ENCODE measurements at regions of chr6 and their contacts with region 1.

Region 1: DNA sequence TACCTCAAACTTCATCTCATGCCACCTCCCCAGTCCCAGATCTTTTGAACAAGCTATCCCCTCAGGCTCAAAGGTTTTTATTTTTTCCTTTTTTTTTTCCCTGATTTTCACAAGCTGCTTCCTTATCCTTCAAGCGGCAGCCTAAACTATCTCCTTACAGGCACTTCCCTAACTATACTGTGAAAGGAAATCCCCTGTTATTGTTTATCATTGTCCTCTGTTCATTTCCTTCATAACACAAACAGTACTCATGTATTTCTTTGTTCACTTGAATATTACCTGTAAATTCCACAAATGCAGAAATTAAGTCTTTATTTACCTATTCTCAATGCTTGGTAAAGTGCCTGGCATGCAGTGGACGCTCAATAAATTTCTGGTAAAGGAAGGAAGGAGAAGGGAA is 48.9 kb downstream of the ME1 start:
- DNase-seq: no peak
- ATAC-seq: peak; percentile 35
- H3K4me3 ChIP-seq: no peak overlapping the region
- H3K27ac ChIP-seq: no peak overlapping the region
- H3K4me1 ChIP-seq: no peaks in the 10 kb centered on the region
- H3K27me3 ChIP-seq: no peaks in the 10 kb centered on the region
- CTCF ChIP-seq: no peak
- EP300 ChIP-seq: no peak
- POLR2A ChIP-seq: no peak
- RAD21 ChIP-seq: no peak

Region 2: DNA sequence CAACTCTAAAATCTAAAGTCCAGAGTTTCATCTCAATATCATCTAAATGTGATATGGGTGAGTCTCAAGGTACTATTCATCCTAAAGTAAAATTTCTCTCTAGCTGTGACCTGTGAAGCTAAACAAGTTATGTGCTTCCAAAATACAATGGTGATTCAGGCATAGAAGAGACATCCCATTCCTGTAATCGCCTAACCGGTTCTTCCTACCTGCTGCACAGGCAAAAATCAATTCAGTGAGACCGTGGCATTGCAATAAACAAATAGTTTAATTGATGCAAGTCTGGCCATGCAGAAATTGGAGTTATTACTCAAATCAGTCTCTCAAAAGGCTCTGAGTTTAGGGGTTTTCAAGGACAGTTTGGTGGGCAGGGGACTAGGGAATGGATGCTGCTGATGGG is 549.1 kb before region 1 on chr6:
- CTCF ChIA-PET with region 1: no interaction called
- POLR2A ChIA-PET with region 1: no interaction called
- RAD21 ChIA-PET with region 1: no interaction called
- SMC1A ChIA-PET with region 1: no interaction called
- in situ Hi-C with region 1: no loop called
- intact Hi-C with region 1: no loop called
- DNase-seq: no peak
- ATAC-seq: no peak
- H3K4me3 ChIP-seq: no peak overlapping the region
- H3K27ac ChIP-seq: no peak overlapping the region
- H3K4me1 ChIP-seq: no peaks in the 10 kb centered on the region
- H3K27me3 ChIP-seq: no peaks in the 10 kb centered on the region
- CTCF ChIP-seq: no peak
- EP300 ChIP-seq: no peak
- POLR2A ChIP-seq: no peak
- RAD21 ChIP-seq: no peak

Region 3: DNA sequence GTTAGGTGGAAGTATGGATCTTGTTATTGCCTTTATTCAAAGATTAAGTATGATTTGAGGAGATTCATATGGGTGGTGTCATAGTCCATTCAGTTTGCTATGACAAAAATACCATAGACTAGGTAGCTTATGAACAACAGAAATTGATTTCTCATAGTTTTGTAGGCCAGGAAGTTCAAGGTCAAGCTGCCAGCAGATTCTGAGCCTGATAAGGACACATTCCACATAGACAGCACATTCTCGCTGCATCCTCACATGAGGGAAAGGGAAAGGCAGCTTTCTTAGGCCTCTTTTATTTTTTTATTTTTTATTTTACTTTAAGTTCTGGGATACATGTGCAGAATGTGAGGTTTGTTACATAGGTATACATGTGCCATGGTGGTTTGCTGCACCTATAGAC is 21.2 kb after region 1 on chr6:
- CTCF ChIA-PET with region 1: no interaction called
- POLR2A ChIA-PET with region 1: interaction called, 14 read pairs
- RAD21 ChIA-PET with region 1: no interaction called
- SMC1A ChIA-PET with region 1: interaction called, 3 read pairs
- in situ Hi-C with region 1: no loop called
- intact Hi-C with region 1: no loop called
- DNase-seq: no peak
- ATAC-seq: no peak
- H3K4me3 ChIP-seq: no peak overlapping the region
- H3K27ac ChIP-seq: no peak overlapping the region
- H3K4me1 ChIP-seq: no peaks in the 10 kb centered on the region
- H3K27me3 ChIP-seq: no peaks in the 10 kb centered on the region
- CTCF ChIP-seq: no peak
- EP300 ChIP-seq: no peak
- POLR2A ChIP-seq: no peak
- RAD21 ChIP-seq: no peak

Region 4: DNA sequence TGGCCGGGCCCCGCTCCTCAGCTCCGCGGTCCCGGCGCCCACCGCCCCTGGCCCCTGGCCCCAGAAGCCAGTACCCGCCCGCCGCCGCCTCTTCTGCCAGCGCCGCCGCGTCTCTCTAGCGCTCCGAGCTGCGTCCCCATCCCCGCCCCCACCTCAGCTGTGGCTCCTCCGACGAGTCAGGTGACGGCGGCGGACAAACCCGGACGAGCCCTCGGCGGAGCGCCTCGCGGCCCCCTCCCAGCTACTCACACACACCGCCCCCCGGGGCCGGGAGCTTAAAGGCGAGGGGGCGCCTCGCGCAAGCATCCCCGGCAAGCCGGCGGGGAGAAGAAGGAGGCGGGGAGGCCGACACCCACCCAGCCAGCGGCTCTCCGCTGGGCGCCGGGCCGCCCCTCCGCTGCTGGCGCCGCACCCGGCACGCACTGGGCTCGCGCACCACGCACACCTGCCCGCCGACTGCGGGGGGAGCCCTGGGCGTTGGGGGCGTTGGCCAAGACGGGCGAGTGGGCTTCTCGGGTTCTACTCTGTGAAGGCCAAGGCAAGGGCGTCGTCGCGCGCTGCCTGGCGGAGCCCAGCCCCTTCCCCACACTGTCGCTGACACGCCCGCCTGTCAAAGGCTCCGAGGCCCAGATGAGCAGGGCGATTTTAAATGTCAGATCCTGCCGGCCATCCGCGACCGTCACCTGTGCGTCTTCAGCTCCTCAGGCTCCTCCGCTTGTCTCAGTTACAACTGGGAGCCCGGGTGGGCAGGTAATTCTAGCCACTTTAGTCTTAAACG is 327.2 kb after region 1 on chr6 and contains the start of gene SNAP91:
- CTCF ChIA-PET with region 1: no interaction called
- POLR2A ChIA-PET with region 1: no interaction called
- RAD21 ChIA-PET with region 1: no interaction called
- SMC1A ChIA-PET with region 1: no interaction called
- in situ Hi-C with region 1: no loop called
- intact Hi-C with region 1: no loop called
- DNase-seq: no peak
- ATAC-seq: peak; percentile 79
- H3K4me3 ChIP-seq: peak within 1 kb of the TSS; percentile 27; the same call in 1 of the 2 replicates
- H3K27ac ChIP-seq: no peak within 1 kb of the TSS
- H3K4me1 ChIP-seq: no peaks in the 10 kb centered on the region
- H3K27me3 ChIP-seq: peaks cover 1 to 13% of the 10 kb centered on the region in 2 experiments; a peak in 2 of 4 replicates
- CTCF ChIP-seq: no peak
- EP300 ChIP-seq: no peak
- POLR2A ChIP-seq: no peak
- RAD21 ChIP-seq: no peak
- polyA plus RNA-seq, gene SNAP91: 0.02 to 0.08 TPM